Panc1 (cell line): ENCODE measurements at regions of chr7 and their contacts with region 1.

Region 1: GRCh38 chr7:44748045-44748947 is at the start of gene ZMIZ2:
- DNase-seq: no peak
- ATAC-seq: peak; percentile 92
- H3K4me3 ChIP-seq: peak within 1 kb of the TSS; percentile 64 to 80
- H3K27ac ChIP-seq: peak within 1 kb of the TSS; percentile 99
- H3K4me1 ChIP-seq: peaks cover 36% of the 10 kb centered on the region
- H3K27me3 ChIP-seq: no peaks in the 10 kb centered on the region
- CTCF ChIP-seq: no peak
- total RNA-seq, gene ZMIZ2: 137 TPM

Region 2: DNA sequence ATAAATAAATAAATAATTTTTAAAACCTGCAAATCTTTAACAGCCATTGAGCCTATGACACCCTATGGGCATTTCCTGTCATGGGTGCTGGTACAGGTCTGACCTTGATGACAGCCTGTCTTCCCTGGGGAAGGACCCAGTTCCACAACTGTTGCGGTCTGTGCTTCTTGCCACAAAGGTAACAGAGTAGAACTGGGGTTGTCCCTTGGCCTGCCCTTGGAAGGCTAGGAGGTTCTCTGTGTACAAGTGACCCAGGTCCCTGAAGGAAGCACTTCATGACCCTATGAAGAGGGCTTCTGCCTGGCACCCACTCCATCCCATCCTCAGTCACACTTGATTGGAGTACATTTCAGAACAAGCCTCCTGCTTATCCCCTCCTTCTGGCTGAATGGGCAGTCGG is 75.0 kb before region 1 on chr7:
- CTCF ChIA-PET with region 1: no interaction called
- POLR2A ChIA-PET with region 1: interaction called, 11 read pairs
- in situ Hi-C with region 1: no loop called
- intact Hi-C with region 1: no loop called
- DNase-seq: no peak
- ATAC-seq: no peak
- H3K4me3 ChIP-seq: no peak overlapping the region
- H3K27ac ChIP-seq: no peak overlapping the region
- H3K4me1 ChIP-seq: no peaks in the 10 kb centered on the region
- H3K27me3 ChIP-seq: no peaks in the 10 kb centered on the region
- CTCF ChIP-seq: no peak

Region 3: DNA sequence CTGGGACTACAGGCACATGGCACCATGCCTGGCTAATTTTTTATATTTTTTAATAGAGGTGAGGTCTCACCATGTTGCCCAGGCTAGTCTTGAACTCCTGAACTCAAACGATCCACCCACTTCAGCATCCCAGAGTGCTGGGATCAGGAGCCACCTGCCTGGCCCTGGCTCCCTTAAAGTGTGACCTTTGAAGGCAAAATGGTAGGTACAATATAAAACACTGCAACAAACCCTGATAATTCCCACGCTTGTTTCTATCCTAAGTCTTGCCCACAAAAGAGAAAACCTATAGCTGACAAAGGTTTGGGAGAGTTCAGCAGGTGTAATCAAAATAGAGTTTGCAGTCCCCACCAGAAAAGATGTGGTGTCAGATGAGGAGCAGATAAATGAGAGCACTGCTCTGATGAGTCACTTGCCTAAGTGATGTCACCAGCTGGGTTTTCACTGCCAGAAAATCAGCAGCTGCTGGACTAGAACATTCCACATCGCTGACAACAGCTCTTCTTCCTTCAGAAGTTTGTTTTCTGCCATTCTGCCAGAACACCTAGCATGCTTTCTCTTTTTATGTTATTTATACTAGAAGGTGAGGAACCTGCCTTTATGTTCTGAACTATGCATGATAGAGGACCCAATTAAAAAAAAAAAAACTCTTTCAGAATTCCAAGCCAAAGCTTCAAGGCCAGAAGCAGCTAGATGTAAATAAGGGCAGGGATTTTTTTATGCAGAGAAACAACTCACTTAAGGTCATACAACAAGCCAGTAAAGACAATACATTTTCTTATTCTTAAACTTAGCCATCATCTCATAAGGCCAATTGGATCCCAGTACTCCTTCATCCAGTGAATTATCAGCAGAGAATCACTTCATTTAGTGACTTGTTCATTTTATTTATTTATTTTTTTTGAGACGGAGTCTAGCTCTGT is 119.0 kb after region 1 on chr7:
- CTCF ChIA-PET with region 1: no interaction called
- POLR2A ChIA-PET with region 1: no interaction called
- in situ Hi-C with region 1: no loop called
- intact Hi-C with region 1: no loop called
- DNase-seq: peak; percentile 75
- ATAC-seq: peak; percentile 82
- H3K4me3 ChIP-seq: no peak overlapping the region
- H3K27ac ChIP-seq: no peak overlapping the region
- H3K4me1 ChIP-seq: no peaks in the 10 kb centered on the region
- H3K27me3 ChIP-seq: no peaks in the 10 kb centered on the region
- CTCF ChIP-seq: no peak

Region 4: GRCh38 chr7:45484094-45484493 is 735.8 kb after region 1 on chr7:
- CTCF ChIA-PET with region 1: no interaction called
- POLR2A ChIA-PET with region 1: no interaction called
- in situ Hi-C with region 1: no loop called
- intact Hi-C with region 1: no loop called
- DNase-seq: no peak
- ATAC-seq: no peak
- H3K4me3 ChIP-seq: no peak overlapping the region
- H3K27ac ChIP-seq: no peak overlapping the region
- H3K4me1 ChIP-seq: no peaks in the 10 kb centered on the region
- H3K27me3 ChIP-seq: no peaks in the 10 kb centered on the region; the same call in none of the 2 replicates
- CTCF ChIP-seq: no peak